ENCODE measurements at regions of chr6 and their contacts with region 1.

Region 1: GRCh38 chr6:26249957-26250697 is 114.9 kb upstream of the BTN3A2 start:
- DNase-seq: peak; percentile 58 to 89 (median 77)
- H3K4me3 ChIP-seq: peak overlapping the region; percentile 94
- H3K4me3 Mint-ChIP-seq: peak overlapping the region; percentile 95 to 99 (median 97)
- H3K27ac ChIP-seq: peak overlapping the region; percentile 74
- H3K27ac Mint-ChIP-seq: peak overlapping the region; percentile 56 to 96 (median 93)
- H3K4me1 ChIP-seq: peaks cover 10% of the 10 kb centered on the region
- H3K4me1 Mint-ChIP-seq: peaks cover 36 to 58% (median 48%) of the 10 kb centered on the region in 3 donors
- H3K27me3 ChIP-seq: no peaks in the 10 kb centered on the region
- H3K27me3 Mint-ChIP-seq: no peaks in the 10 kb centered on the region

Region 2: GRCh38 chr6:25821341-25821740 is 428.8 kb before region 1 on chr6:
- CTCF ChIA-PET with region 1: no interaction called
- POLR2A ChIA-PET with region 1: no interaction called
- DNase-seq: no peak
- H3K4me3 ChIP-seq: no peak overlapping the region
- H3K4me3 Mint-ChIP-seq: no peak overlapping the region
- H3K27ac ChIP-seq: no peak overlapping the region
- H3K27ac Mint-ChIP-seq: no peak overlapping the region
- H3K4me1 ChIP-seq: no peaks in the 10 kb centered on the region
- H3K4me1 Mint-ChIP-seq: no peaks in the 10 kb centered on the region
- H3K27me3 ChIP-seq: no peaks in the 10 kb centered on the region
- H3K27me3 Mint-ChIP-seq: peaks cover 20 to 34% of the 10 kb centered on the region in 2 donors

Region 3: GRCh38 chr6:26175428-26176181 is 74.5 kb before region 1 on chr6:
- CTCF ChIA-PET with region 1: interaction called, 17 read pairs
- POLR2A ChIA-PET with region 1: interaction called, 10 read pairs
- DNase-seq: peak; percentile 8 to 63 (median 52)
- H3K4me3 ChIP-seq: no peak overlapping the region
- H3K4me3 Mint-ChIP-seq: peak overlapping the region in 2 of 7 donors; percentile 21 to 75
- H3K27ac ChIP-seq: no peak overlapping the region
- H3K27ac Mint-ChIP-seq: peak overlapping the region; percentile 8 to 89 (median 78)
- H3K4me1 ChIP-seq: peaks cover 36% of the 10 kb centered on the region
- H3K4me1 Mint-ChIP-seq: peaks cover 30 to 44% (median 40%) of the 10 kb centered on the region in 3 donors
- H3K27me3 ChIP-seq: no peaks in the 10 kb centered on the region
- H3K27me3 Mint-ChIP-seq: peaks cover 0 to 3% of the 10 kb centered on the region in 2 donors

Region 4: GRCh38 chr6:26183581-26184366 is 66.4 kb before region 1 on chr6:
- CTCF ChIA-PET with region 1: interaction called, 14 read pairs
- POLR2A ChIA-PET with region 1: interaction called, 12 read pairs
- DNase-seq: peak; percentile 31 to 78 (median 72)
- H3K4me3 ChIP-seq: peak overlapping the region; percentile 81
- H3K4me3 Mint-ChIP-seq: peak overlapping the region; percentile 86 to 99 (median 97)
- H3K27ac ChIP-seq: peak overlapping the region; percentile 71
- H3K27ac Mint-ChIP-seq: peak overlapping the region; percentile 71 to 99 (median 96)
- H3K4me1 ChIP-seq: peaks cover 33% of the 10 kb centered on the region
- H3K4me1 Mint-ChIP-seq: peaks cover 41 to 53% (median 44%) of the 10 kb centered on the region in 3 donors
- H3K27me3 ChIP-seq: no peaks in the 10 kb centered on the region
- H3K27me3 Mint-ChIP-seq: no peaks in the 10 kb centered on the region

Region 5: GRCh38 chr6:26204332-26205165 is 45.6 kb before region 1 on chr6:
- CTCF ChIA-PET with region 1: interaction called, 5 read pairs
- POLR2A ChIA-PET with region 1: interaction called, 104 read pairs
- DNase-seq: peak; percentile 75 to 95 (median 87)
- H3K4me3 ChIP-seq: peak overlapping the region; percentile 73
- H3K4me3 Mint-ChIP-seq: no peak overlapping the region
- H3K27ac ChIP-seq: peak overlapping the region; percentile 99
- H3K27ac Mint-ChIP-seq: no peak overlapping the region
- H3K4me1 ChIP-seq: peaks cover 31% of the 10 kb centered on the region
- H3K4me1 Mint-ChIP-seq: peaks cover 18 to 31% (median 20%) of the 10 kb centered on the region in 3 donors
- H3K27me3 ChIP-seq: no peaks in the 10 kb centered on the region
- H3K27me3 Mint-ChIP-seq: peaks cover 0 to 8% of the 10 kb centered on the region in 2 donors

Region 6: DNA sequence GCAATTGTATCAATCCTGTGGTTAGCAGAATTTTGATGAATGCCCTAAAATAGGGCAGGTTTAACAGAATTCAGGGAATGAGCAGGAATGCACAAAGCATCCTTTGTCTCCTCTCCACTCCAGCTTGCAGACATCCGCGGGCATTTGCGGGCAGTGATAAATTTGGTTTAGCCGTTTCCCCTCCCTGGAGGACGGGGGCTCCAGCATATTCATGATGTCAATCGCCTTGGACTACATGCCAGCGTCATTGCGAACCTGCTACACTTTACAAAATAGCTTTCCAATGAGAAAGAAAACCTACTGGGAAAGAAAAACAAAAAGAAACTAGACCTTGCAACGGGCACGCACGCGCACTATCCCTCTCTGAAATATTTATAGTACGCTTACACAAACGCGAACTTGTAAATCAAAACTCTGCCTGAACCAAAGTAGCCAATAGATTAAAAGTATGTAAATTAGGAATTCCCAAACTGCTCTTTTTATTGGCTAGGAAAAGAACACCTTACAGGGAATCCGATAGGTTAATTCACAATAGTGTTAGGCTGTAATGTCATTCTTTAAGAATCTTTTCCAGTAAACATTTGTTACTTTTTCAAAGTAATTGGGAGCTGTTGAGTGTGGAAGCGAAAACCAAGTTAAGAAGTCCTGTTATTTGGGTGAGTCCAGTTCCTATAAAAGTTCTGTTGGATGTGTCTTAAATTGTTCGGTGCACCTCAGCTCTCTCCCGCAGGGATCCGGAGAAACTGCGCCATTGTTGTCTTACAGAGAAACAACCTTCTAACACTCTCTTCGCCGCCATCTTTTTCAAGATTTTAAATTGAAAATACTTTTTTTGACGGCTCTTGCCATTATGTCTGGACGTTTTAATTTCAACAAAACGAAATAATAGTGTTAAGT is 26.2 kb before region 1 on chr6:
- CTCF ChIA-PET with region 1: interaction called, 32 read pairs
- POLR2A ChIA-PET with region 1: interaction called, 5 read pairs
- DNase-seq: peak; percentile 57 to 83 (median 78)
- H3K4me3 ChIP-seq: peak overlapping the region; percentile 87
- H3K4me3 Mint-ChIP-seq: no peak overlapping the region
- H3K27ac ChIP-seq: peak overlapping the region; percentile 72
- H3K27ac Mint-ChIP-seq: no peak overlapping the region
- H3K4me1 ChIP-seq: peaks cover 17% of the 10 kb centered on the region
- H3K4me1 Mint-ChIP-seq: peaks cover under 1 to 7% (median 7%) of the 10 kb centered on the region in 3 donors
- H3K27me3 ChIP-seq: no peaks in the 10 kb centered on the region
- H3K27me3 Mint-ChIP-seq: no peaks in the 10 kb centered on the region

Region 7: GRCh38 chr6:26234421-26235296 is 15.5 kb before region 1 on chr6:
- CTCF ChIA-PET with region 1: interaction called, 62 read pairs
- POLR2A ChIA-PET with region 1: interaction called, 6 read pairs
- DNase-seq: peak; percentile 38 to 84 (median 76)
- H3K4me3 ChIP-seq: peak overlapping the region; percentile 94
- H3K4me3 Mint-ChIP-seq: peak overlapping the region; percentile 87 to 95 (median 91)
- H3K27ac ChIP-seq: peak overlapping the region; percentile 88
- H3K27ac Mint-ChIP-seq: peak overlapping the region; percentile 87 to 98 (median 96)
- H3K4me1 ChIP-seq: peaks cover 19% of the 10 kb centered on the region
- H3K4me1 Mint-ChIP-seq: peaks cover 28 to 35% (median 35%) of the 10 kb centered on the region in 3 donors
- H3K27me3 ChIP-seq: no peaks in the 10 kb centered on the region
- H3K27me3 Mint-ChIP-seq: peaks cover 0 to 5% of the 10 kb centered on the region in 2 donors

Region 8: DNA sequence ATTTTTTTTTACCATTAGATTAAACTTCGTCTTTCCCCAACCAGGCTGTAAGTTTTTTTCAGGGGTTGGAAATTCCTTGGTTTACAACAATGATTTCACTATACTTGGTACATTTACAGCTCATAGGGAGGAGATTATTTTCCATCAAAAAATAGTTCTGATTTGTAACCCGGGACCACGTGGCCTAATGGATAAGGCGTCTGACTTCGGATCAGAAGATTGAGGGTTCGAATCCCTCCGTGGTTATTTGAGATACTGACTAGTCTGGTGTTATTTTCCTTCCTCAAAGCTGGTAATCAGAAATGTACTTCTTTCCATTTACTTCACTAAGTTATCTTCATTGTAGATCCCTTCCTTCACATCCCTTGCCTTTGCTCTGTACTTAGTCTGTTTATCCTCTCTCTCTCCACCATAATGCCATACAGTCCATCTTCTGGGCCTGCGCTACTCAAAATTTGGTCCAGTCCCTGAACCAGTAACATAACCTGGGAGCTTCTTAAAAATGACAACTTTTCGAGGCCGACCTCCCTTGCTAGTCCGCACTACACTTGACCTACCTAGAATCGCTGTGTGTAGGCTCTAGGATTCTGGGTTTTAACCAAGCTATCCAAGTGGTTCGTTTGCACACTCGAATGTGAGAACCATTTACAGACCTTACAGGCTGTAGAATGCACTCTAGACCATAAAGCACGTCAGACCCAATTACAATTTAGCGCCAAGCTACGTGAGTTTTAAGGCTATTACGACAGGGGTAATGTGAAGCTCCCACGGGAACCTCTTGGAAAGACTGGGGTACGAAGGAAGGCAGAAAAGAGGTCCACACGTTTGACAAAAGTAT is 72.7 kb after region 1 on chr6:
- CTCF ChIA-PET with region 1: interaction called, 13 read pairs
- POLR2A ChIA-PET with region 1: interaction called, 4 read pairs
- DNase-seq: peak in 4 of 5 donors; percentile 38 to 79 (median 70)
- H3K4me3 ChIP-seq: peak overlapping the region; percentile 62
- H3K4me3 Mint-ChIP-seq: peak overlapping the region; percentile 72 to 93 (median 87)
- H3K27ac ChIP-seq: peak overlapping the region; percentile 69
- H3K27ac Mint-ChIP-seq: peak overlapping the region; percentile 80 to 94 (median 85)
- H3K4me1 ChIP-seq: no peaks in the 10 kb centered on the region
- H3K4me1 Mint-ChIP-seq: peaks cover 24 to 37% (median 28%) of the 10 kb centered on the region in 3 donors
- H3K27me3 ChIP-seq: no peaks in the 10 kb centered on the region
- H3K27me3 Mint-ChIP-seq: peaks cover 5 to 19% of the 10 kb centered on the region in 2 donors